Activated CD4-positive, alpha-beta T cell treated with anti-CD3 and anti-CD28 coated beads for 36 hours (primary cell): ENCODE measurements at regions of chr14 and their contacts with region 1.

Region 1: GRCh38 chr14:70907176-70907995 is at the start of gene PCNX1:
- DNase-seq: peak; percentile 93
- ATAC-seq: peak; percentile 73
- H3K4me3 Mint-ChIP-seq: peak within 1 kb of the TSS; percentile 96
- H3K27ac Mint-ChIP-seq: peak within 1 kb of the TSS; percentile 94
- H3K4me1 Mint-ChIP-seq: peaks cover 70% of the 10 kb centered on the region
- H3K27me3 Mint-ChIP-seq: no peaks in the 10 kb centered on the region
- total RNA-seq, gene PCNX1: 38.4 to 57.9 TPM

Region 2: DNA sequence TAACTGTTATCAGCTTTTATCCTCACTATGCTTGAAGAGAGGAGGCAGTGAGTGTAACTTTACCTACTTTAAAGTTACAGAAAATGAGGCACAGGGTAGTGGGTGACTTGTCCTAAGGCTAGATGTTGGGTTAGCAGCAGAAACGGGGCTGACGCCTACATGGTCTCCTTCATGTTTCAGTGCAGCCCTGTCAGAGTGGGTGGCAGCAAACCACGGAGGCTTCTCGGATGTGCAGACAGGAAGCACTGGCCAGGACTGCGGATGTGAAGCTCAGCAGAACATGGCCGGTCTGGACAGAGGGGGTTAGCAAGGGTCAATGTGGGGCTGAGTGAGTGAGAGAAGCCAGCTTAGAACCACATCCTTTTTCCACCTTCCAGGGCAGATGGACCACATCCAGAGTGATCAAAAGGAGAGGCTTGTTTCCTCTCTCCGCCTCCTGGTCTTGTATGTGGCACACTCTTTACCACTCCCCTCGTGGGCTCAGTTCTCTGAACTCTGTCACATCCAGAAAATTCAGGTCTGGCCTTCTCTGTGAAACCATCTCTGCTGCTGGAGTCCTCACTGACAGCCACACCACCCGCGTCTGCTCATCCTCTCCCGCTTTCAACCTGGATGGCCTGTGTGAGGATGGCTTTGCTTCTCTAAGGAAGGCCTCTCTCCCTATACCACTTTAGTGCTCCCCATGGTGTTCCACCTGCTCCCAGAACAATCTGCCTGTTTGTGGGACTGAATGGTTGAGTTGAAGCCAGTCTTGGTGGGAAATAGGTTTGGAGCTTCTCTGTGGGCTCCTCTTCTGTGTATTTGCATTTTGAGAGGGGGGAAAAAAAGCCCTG is 1281.9 kb before region 1 on chr14:
- CTCF ChIA-PET with region 1: no interaction called
- POLR2A ChIA-PET with region 1: no interaction called
- intact Hi-C with region 1: loop called in 1 of 2 experiments (anchors 10 kb)
- DNase-seq: peak; percentile 89
- ATAC-seq: peak; percentile 81
- H3K4me3 Mint-ChIP-seq: peak overlapping the region; percentile 66
- H3K27ac Mint-ChIP-seq: peak overlapping the region; percentile 96
- H3K4me1 Mint-ChIP-seq: peaks cover 96% of the 10 kb centered on the region
- H3K27me3 Mint-ChIP-seq: no peaks in the 10 kb centered on the region

Region 3: DNA sequence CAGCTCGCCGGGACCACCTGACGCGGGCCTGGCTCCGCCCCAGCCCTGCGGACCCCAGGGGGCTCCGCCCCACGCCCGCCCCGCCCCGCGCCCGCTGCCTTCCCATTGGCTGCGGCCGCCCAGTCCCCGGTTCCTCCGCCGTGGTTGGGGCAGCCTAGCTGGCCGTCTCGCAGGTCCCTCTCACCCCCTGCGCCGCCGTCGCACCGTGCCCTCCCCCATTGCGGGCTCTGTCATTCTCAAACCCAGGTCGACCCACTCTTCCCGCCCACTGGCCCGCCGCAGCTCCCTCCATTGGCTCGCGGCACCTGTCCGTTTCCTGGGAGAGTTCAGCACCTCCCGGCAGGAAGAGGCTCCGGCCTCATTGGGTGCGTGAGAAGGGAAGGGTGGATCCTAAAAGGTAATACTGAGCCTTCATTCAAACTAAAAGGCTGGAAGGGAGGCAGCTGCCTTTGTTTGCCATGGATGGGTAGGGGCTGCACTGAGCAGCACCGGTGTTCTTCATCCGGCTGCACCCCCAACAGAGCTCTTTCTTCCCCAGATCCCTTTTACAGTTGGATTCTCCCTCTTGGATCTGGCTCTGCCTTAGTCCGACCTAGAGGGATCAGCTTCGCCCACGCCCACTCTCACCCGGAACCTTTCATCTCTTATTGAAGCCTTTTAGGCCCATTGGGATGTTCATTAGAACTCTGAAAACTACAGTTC is 97.7 kb before region 1 on chr14:
- CTCF ChIA-PET with region 1: interaction called, 8 read pairs
- POLR2A ChIA-PET with region 1: interaction called, 4 read pairs
- intact Hi-C with region 1: loop called in 1 of 2 experiments (anchors 1 kb)
- DNase-seq: peak; percentile 96
- ATAC-seq: peak; percentile 87
- H3K4me3 Mint-ChIP-seq: no peak overlapping the region
- H3K27ac Mint-ChIP-seq: peak overlapping the region; percentile 20
- H3K4me1 Mint-ChIP-seq: peaks cover 4% of the 10 kb centered on the region
- H3K27me3 Mint-ChIP-seq: no peaks in the 10 kb centered on the region

Region 4: DNA sequence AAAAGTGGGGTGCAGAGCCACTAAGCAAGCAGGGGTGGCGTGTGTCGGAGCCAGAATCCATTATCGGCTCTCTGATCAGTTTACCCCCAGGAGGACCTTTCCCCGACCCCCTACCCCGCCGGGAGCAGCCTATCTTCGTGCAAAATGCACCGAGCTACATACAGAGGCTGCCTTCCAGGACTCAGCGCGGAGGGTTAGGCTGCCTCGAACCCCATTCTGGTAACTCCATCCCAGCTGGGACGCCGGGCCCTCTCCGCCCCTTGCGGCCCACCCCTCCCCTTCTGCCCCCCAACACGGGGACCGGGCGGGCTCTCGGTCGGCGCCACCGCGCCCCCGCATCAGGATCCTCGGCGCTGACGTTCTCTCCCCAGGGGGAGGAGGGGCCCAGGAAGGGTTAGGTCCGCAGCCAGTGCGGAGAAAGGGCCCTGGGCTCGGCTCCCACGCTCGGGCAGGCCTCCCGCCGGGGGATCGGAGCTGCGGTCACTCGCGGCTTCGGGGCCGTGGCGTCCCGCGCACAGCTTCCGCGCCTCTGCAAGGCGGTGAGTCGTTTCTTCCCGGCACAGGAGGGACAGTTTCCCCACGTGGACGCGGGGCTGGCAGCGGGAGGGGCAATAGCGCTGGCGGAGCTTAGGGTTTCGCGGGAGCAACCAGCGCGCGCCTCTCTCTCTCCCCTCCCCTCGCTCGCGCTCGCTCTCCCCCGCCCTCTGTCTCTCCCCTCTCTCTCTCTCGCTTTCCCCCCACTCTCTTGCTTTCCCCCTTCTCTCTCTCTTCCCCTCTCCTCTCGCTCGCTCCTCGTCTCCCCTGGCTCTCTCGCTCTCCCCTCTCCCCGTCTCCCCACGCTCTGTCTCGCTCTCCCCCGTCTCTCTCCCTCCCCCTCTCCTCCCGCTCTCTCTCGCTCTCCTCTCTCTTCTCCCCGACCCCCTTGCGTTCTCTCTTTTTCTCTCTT is 85.5 kb before region 1 on chr14:
- CTCF ChIA-PET with region 1: interaction called, 19 read pairs
- POLR2A ChIA-PET with region 1: interaction called, 4 read pairs
- intact Hi-C with region 1: loop called in 1 of 2 experiments (anchors 2 kb)
- DNase-seq: peak; percentile 78
- ATAC-seq: peak; percentile 43
- H3K4me3 Mint-ChIP-seq: peak overlapping the region; percentile 73
- H3K27ac Mint-ChIP-seq: peak overlapping the region; percentile 13
- H3K4me1 Mint-ChIP-seq: peaks cover 16% of the 10 kb centered on the region
- H3K27me3 Mint-ChIP-seq: peaks cover 28% of the 10 kb centered on the region

Region 5: DNA sequence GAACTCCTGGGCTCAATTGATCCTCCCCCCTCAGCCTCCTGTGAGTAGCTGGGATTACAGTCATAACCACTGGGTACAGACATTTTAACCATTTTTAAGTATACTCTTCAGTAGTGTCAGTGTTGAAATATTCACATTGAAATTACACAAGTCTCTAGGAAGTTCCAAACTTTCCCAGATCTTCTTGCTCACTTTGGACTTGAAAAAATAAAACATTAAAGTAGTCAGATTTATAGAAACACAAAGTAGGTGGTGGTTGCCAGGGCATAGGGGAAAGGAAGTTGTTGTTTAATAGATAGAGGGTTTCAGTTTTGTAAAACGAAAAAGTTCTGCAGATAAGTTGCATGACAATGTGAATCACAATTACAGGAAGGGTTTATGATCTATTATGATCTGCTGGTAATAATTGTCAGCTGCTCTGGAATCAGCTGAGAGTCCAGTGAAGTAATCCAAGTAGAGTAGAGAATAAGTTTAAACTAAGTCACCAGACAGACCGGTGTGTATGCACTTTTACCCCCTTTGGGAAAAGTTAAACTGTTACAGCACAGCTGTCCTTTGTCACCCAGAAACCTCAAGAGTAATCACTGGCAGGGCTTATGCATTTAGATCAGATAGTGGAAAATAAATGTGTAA is 27.2 kb after region 1 on chr14:
- CTCF ChIA-PET with region 1: interaction called, 7 read pairs
- POLR2A ChIA-PET with region 1: no interaction called
- intact Hi-C with region 1: loop called in 1 of 2 experiments (anchors 1 kb)
- DNase-seq: peak; percentile 36
- ATAC-seq: peak; percentile 87
- H3K4me3 Mint-ChIP-seq: peak overlapping the region; percentile 43
- H3K27ac Mint-ChIP-seq: peak overlapping the region; percentile 92
- H3K4me1 Mint-ChIP-seq: peaks cover 76% of the 10 kb centered on the region
- H3K27me3 Mint-ChIP-seq: no peaks in the 10 kb centered on the region

Region 6: GRCh38 chr14:70972107-70972976 is 65.0 kb after region 1 on chr14:
- CTCF ChIA-PET with region 1: interaction called, 13 read pairs
- POLR2A ChIA-PET with region 1: no interaction called
- intact Hi-C with region 1: loop called (anchors 1 kb)
- DNase-seq: peak; percentile 91
- ATAC-seq: peak; percentile 88
- H3K4me3 Mint-ChIP-seq: no peak overlapping the region
- H3K27ac Mint-ChIP-seq: peak overlapping the region; percentile 47
- H3K4me1 Mint-ChIP-seq: peaks cover 29% of the 10 kb centered on the region
- H3K27me3 Mint-ChIP-seq: no peaks in the 10 kb centered on the region